ENCODE measurements at regions of chr3 and their contacts with region 1.

Region 1: DNA sequence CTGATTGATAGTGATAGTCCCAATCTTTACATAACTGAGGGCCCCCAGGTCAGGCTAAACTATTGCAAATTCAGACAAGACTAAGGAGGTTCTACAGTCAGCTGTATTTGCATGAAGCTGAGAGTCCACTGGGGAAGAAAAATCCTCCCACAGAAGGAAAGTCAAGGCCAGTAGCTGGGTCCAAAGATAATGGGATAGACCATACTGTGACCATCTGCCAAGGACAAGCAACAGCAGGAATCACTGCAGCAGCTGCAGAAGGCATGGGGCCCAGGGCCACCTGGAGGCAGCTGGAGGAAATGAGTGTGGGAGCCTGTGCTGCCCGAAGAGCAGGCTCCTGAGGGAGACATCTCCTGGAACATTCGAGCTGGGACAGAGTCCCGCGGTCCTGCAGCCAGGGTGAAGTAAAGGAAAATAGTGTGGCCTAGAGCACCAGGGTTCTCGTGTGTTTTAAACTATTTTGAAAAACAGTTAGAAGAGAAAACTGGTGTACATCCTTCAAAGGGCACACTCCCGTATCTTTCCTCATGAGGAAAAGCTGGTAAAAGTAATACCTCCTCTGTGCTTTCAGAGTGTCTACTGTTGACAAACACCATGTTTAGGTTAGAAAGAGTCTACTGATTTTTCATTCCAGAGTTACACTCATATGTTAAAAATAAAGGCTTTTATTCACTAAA is 13.2 kb upstream of the TMEM212 start:
- DNase-seq: no peak
- H3K4me3 ChIP-seq: no peak overlapping the region
- H3K27ac ChIP-seq: peak overlapping the region; percentile 15 to 54 (median 24)
- H3K4me1 ChIP-seq: peaks cover 0 to 48% (median 22%) of the 10 kb centered on the region in 3 donors
- H3K27me3 ChIP-seq: no peaks in the 10 kb centered on the region
- CTCF ChIP-seq: peak in 5 of 6 experiments; percentile 61 to 89 (median 77)
- POLR2A ChIP-seq: no peak

Region 2: GRCh38 chr3:171225708-171226107 is 604.3 kb before region 1 on chr3:
- intact Hi-C with region 1: no loop called
- DNase-seq: no peak
- H3K4me3 ChIP-seq: no peak overlapping the region
- H3K27ac ChIP-seq: no peak overlapping the region
- H3K4me1 ChIP-seq: peaks cover 0 to 2% (median 0%) of the 10 kb centered on the region in 3 donors
- H3K27me3 ChIP-seq: no peaks in the 10 kb centered on the region
- CTCF ChIP-seq: no peak
- POLR2A ChIP-seq: no peak

Region 3: DNA sequence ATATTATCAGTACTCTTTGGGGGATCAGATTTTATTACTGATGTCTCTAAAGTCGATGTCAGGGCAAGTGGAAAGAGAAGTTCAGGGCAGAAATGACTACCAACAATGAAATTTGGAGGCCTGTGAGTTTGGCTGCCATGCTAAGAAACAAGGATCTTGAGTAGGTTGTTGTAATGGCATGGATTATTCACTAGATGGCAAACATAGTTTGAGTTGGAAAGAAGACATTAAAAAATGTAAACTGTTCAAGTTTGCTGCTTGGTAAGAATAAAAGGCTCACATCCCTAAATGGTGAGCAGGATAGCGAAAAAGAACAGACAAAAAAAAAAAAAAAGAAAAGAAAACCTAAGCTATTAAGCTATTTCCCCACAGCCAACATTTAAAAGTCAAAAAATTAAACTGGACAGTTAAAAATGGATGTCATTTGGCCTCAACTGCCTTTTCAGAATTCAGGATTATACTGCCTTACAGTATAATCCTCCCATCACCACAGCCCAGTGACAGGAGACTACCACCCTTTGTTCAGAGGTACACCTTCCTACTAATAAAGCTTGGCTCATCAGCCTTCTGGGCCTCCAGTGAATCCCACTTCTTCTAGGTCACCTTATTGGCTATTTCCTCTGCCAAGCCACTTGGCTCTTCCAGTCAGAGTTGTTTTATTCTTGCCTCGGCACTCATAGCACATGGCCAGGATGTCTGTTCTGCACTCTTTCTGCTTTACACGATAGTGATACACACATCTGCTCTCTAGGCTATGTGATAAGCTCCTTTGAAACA is 183.4 kb before region 1 on chr3:
- intact Hi-C with region 1: loop called (anchors 10 kb)
- DNase-seq: no peak
- H3K4me3 ChIP-seq: no peak overlapping the region
- H3K27ac ChIP-seq: peak overlapping the region in 3 of 4 donors; percentile 26 to 63 (median 56)
- H3K4me1 ChIP-seq: peaks cover 0 to 9% (median 3%) of the 10 kb centered on the region in 3 donors
- H3K27me3 ChIP-seq: no peaks in the 10 kb centered on the region
- CTCF ChIP-seq: peak in 5 of 6 experiments; percentile 43 to 64 (median 57)
- POLR2A ChIP-seq: no peak

Region 4: DNA sequence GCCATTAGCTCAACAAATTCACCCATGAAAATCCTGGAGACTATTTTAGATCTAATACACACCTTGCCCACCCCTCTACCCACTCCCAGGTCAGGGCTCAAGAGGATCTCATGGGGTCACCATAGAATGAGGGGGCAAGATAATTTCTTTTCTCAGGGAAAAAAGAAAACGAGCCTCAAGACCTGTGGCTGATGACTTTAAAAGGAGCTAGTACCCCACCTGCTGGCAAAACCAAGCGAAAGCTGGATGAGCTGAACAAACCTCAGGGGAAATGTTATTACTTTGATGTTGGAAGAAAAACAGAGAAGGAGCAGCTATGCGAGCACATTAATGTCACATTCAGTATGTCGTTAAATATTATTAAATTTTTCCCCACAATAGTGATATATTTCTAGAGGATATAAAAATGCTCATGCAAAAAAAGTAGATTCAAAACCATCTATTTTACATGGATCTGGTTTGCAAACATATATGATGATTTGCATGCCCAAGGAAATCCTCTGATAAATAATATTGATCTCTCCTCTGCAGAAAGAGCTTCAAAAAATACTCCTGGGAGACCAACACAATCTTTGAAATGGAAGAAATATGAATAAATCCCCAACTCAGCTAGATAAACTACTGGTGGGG is 57.4 kb before region 1 on chr3:
- intact Hi-C with region 1: loop called (anchors 10 kb)
- DNase-seq: no peak
- H3K4me3 ChIP-seq: no peak overlapping the region
- H3K27ac ChIP-seq: peak overlapping the region in 2 of 4 donors; percentile 85 to 86
- H3K4me1 ChIP-seq: peaks cover 19 to 72% (median 28%) of the 10 kb centered on the region in 3 donors
- H3K27me3 ChIP-seq: no peaks in the 10 kb centered on the region
- CTCF ChIP-seq: peak in 5 of 6 experiments; percentile 63 to 74 (median 67)
- POLR2A ChIP-seq: no peak

Measured in esophagus squamous epithelium (tissue), 5 donors.